OCI-LY7 (cell line): ENCODE measurements at regions of chr1 and their contacts with region 1.

Region 1: GRCh38 chr1:11645670-11646265 is 8.5 kb downstream of the FBXO2 start:
- DNase-seq: peak; percentile 81
- H3K4me3 ChIP-seq: no peak overlapping the region
- H3K27ac ChIP-seq: no peak overlapping the region
- H3K4me1 ChIP-seq: peaks cover 19% of the 10 kb centered on the region
- CTCF ChIP-seq: peak; percentile 81

Region 2: DNA sequence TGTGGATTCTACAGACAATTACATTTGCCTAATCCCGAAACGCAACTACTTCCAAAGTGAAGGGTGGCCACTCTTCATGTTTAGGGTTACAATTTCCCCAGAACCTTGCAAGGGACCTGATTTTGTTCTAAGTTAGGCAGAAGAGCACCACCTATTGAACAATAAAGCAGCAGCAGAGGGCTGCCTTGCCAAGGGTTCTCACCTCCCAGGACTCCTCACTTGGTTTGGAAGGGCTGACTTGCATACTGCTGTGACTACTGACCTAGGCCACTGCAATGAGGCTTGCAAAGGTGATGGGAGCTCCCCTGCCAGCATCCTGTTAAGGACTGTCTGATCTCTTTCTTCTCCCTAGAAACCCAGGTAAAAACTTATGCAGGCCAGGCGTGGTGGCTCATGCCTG is 397.6 kb before region 1 on chr1:
- CTCF ChIA-PET with region 1: no interaction called
- POLR2A ChIA-PET with region 1: no interaction called
- intact Hi-C with region 1: loop called (anchors 5 kb)
- DNase-seq: peak; percentile 14
- H3K4me3 ChIP-seq: no peak overlapping the region
- H3K27ac ChIP-seq: no peak overlapping the region
- H3K4me1 ChIP-seq: no peaks in the 10 kb centered on the region
- CTCF ChIP-seq: peak; percentile 50

Region 3: GRCh38 chr1:11337580-11338073 is 308.1 kb before region 1 on chr1:
- CTCF ChIA-PET with region 1: no interaction called
- POLR2A ChIA-PET with region 1: no interaction called
- intact Hi-C with region 1: loop called (anchors 1 kb)
- DNase-seq: peak; percentile 71
- H3K4me3 ChIP-seq: no peak overlapping the region
- H3K27ac ChIP-seq: no peak overlapping the region
- H3K4me1 ChIP-seq: no peaks in the 10 kb centered on the region
- CTCF ChIP-seq: peak; percentile 95

Region 4: DNA sequence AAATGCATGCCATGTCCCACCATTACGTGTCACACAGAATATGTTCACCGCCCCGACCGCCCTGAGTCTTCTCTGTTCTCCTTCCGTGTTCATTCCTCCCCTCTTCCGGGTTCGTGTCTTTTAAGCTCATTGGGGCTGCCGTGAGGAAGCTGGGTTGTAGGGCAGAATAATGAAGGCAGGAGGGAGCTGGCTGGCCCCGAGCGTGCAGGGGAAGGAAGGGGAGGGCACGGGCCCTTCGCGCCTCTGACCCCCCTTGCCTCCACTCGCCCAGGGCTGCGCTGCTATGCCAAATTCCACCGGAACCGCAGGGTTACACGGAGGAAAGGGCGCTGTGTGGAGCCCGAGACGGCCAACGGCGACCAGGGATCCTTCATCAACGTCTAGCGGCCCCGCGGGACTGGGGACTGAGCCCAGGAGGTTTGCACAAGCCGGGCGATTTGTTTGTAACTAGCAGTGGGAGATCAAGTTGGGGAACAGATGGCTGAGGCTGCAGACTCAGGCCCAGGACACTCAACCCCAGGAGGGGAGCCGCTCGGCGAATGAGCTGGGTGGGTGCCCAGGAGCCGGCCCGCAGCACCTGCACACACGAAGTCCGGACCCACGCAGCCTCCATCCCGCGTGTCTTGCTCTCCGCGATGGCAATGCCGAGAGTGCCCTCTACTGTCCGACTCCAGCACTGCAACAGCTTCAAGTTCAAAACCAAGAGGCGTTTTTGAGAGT is 73.7 kb after region 1 on chr1:
- CTCF ChIA-PET with region 1: no interaction called
- POLR2A ChIA-PET with region 1: no interaction called
- intact Hi-C with region 1: loop called (anchors 1 kb)
- DNase-seq: peak; percentile 83
- H3K4me3 ChIP-seq: peak overlapping the region; percentile 63
- H3K27ac ChIP-seq: peak overlapping the region; percentile 60
- H3K4me1 ChIP-seq: peaks cover 13% of the 10 kb centered on the region
- CTCF ChIP-seq: peak; percentile 100

Region 5: GRCh38 chr1:11967028-11967547 is 321.3 kb after region 1 on chr1:
- CTCF ChIA-PET with region 1: no interaction called
- POLR2A ChIA-PET with region 1: no interaction called
- intact Hi-C with region 1: loop called (anchors 10 kb)
- DNase-seq: peak; percentile 83
- H3K4me3 ChIP-seq: no peak overlapping the region
- H3K27ac ChIP-seq: no peak overlapping the region
- H3K4me1 ChIP-seq: no peaks in the 10 kb centered on the region
- CTCF ChIP-seq: peak; percentile 87